Activated CD4-positive, alpha-beta memory T cell treated with anti-CD3 and anti-CD28 coated beads for 36 hours (primary cell): ENCODE measurements at regions of chr2 and their contacts with region 1.

Region 1: DNA sequence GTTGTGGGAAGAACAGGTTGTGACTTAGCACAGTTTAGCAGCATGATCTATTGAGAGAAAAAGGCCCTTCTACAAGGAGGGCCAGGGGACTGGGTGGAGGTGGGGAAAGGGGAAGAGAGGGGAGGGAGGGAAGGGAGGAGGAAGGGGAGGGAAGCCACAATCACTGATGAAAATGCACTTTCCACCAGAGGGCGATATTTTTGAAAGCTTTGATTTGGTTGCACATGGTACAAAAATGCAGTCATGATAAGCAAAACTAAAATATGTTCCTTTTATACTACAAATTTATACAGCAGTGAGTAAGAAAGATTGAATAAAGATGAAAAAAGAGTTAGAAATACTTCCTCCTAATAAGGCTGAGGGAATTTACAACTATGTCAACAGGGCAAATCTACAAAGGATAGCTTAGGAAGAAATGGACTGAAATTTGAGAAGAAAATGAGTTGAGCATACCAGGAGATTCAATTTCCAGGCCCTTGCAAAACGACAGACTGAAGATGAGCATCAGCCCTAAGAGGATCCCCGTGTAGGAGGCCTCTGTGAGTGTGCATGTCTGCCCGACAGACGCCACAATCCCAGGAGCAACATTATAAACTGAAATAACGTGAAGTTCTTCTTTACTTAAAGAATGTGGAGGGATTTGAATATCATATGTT is 17.2 kb downstream of the SH3YL1 start:
- DNase-seq: peak; percentile 20
- H3K4me3 Mint-ChIP-seq: no peak overlapping the region
- H3K27ac Mint-ChIP-seq: no peak overlapping the region
- H3K4me1 Mint-ChIP-seq: peaks cover 2% of the 10 kb centered on the region
- H3K27me3 Mint-ChIP-seq: no peaks in the 10 kb centered on the region

Region 2: DNA sequence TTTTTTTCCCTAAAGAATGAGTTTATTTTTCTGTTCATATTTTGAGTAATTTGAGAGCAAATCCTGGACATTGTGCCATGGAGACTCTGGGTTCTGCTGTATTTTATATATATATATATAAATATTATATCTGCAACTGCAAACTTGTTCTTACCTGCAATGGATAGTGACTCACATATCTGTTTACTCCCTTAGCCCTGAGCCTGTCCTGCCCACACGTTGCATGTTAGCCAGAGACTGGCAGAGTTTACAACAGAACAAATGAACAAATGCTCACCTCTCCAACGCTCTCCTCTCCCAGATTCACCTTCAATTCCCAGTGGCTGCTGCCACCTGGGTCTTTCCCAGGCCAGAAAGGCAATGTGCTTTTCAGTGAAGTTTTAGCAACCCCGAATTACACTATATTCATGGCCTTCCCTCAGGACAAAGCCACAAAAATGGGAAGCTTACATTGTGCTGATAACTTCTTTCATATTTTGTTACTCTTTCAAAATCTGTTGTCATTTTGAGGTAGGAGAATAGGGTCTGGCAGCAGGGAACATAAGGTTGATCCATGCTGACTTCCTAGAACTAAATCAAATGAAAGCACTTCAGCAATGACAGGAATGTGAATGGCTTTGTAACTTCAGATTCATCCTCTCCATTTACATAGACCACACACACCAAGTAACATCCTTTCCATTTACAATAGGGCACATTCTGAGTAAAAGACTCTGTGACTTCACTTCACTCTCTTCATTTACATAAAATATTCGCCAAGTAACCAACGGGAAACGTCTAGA is 94.9 kb before region 1 on chr2:
- CTCF ChIA-PET with region 1: no interaction called
- POLR2A ChIA-PET with region 1: no interaction called
- intact Hi-C with region 1: no loop called
- DNase-seq: no peak
- H3K4me3 Mint-ChIP-seq: no peak overlapping the region
- H3K27ac Mint-ChIP-seq: no peak overlapping the region
- H3K4me1 Mint-ChIP-seq: no peaks in the 10 kb centered on the region
- H3K27me3 Mint-ChIP-seq: peaks cover 9% of the 10 kb centered on the region

Region 3: GRCh38 chr2:257429-257828 is 10.8 kb after region 1 on chr2:
- CTCF ChIA-PET with region 1: interaction called, 17 read pairs
- POLR2A ChIA-PET with region 1: no interaction called
- intact Hi-C with region 1: no loop called
- DNase-seq: no peak
- H3K4me3 Mint-ChIP-seq: no peak overlapping the region
- H3K27ac Mint-ChIP-seq: no peak overlapping the region
- H3K4me1 Mint-ChIP-seq: peaks cover 4% of the 10 kb centered on the region
- H3K27me3 Mint-ChIP-seq: no peaks in the 10 kb centered on the region

Region 4: DNA sequence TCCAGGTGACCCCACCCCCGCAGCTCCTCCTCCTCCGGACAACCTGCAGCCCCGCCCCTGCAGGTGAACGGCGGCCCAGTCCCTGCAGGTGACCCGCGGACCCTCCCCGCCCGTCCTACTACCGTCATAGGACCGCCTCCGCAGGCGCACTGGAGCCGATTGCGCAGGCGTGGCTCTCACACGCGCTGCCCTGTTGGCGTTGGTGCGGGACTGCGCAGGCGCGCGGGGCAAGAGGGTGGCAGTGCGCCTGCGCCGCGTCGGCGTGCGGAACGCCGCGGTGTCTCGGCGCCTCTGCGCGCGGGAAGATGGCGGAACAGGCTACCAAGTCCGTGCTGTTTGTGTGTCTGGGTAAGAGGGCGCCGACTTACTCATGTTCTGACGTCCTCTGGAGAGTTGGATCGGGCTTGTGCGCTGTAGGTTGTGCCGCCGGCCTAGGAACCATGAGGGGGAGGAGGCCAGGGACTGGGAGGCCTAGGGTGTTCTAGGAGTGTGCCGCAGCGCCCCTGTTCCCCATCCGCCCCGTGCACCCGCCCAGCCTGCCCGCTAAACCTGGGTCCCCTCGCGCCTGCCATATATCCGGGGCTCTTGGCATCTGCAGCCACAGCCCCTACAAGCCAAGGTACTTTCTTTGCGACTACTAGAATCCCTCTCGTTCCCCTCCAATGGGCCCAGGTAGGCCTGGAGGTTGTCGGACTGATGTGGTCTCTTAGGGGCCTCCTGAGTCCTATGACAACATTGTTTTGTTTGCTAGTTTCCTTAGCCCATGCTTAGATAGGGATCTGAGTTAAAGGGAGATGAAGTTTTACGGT is 18.2 kb after region 1 on chr2 and contains the start of gene ACP1:
- CTCF ChIA-PET with region 1: interaction called, 9 read pairs
- POLR2A ChIA-PET with region 1: no interaction called
- intact Hi-C with region 1: loop called (anchors 2 kb)
- DNase-seq: peak; percentile 96
- H3K4me3 Mint-ChIP-seq: peak within 1 kb of the TSS; percentile 91
- H3K27ac Mint-ChIP-seq: peak within 1 kb of the TSS; percentile 93
- H3K4me1 Mint-ChIP-seq: peaks cover 44% of the 10 kb centered on the region
- H3K27me3 Mint-ChIP-seq: no peaks in the 10 kb centered on the region
- total RNA-seq, gene ACP1: 121 to 127 TPM

Region 5: GRCh38 chr2:290090-290722 is 43.6 kb after region 1 on chr2:
- CTCF ChIA-PET with region 1: interaction called, 6 read pairs
- POLR2A ChIA-PET with region 1: no interaction called
- intact Hi-C with region 1: loop called (anchors 2 kb)
- DNase-seq: peak; percentile 68
- H3K4me3 Mint-ChIP-seq: peak overlapping the region; percentile 48
- H3K27ac Mint-ChIP-seq: no peak overlapping the region
- H3K4me1 Mint-ChIP-seq: peaks cover 3% of the 10 kb centered on the region
- H3K27me3 Mint-ChIP-seq: peaks cover 32% of the 10 kb centered on the region

Region 6: DNA sequence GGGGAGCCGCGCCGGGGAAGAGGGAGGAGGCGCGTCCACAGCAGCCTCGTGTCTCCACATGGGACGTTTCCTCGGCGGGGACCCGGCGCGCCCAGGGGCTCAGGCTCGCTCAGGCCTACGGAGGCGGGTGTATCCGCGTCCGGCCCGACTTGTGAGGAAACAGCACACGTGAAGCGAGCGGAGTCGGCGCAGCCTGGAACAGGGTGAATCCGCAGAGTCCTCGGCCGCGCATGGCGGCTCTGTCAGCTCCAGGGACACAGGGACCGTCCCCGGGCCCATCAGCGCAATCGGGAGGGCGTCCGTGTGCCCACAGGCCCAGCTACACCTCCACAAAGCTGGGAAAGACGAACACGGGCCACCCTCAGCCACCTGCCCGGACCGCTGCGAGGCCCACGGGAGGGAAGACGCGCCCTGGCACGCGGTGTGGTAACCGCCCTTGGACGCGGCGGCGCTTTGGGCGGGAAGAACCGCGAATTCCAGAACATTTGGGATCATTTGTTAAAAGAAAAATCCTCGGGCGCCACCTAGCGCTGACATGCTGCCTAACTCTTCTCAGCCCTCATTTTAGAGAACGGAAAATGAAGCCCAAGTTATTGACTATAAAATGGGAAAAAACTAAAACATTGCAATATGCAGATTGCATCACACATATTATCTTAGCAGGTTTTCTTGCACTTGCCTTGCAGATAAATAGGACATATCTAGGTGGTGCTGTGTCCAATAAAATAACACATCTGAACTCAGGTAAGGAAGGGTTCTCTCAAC is 390.2 kb after region 1 on chr2:
- CTCF ChIA-PET with region 1: interaction called, 16 read pairs
- POLR2A ChIA-PET with region 1: no interaction called
- intact Hi-C with region 1: loop called (anchors 1 kb)
- DNase-seq: peak; percentile 62
- H3K4me3 Mint-ChIP-seq: peak overlapping the region; percentile 59
- H3K27ac Mint-ChIP-seq: no peak overlapping the region
- H3K4me1 Mint-ChIP-seq: peaks cover 4% of the 10 kb centered on the region
- H3K27me3 Mint-ChIP-seq: peaks cover 3% of the 10 kb centered on the region

Region 7: DNA sequence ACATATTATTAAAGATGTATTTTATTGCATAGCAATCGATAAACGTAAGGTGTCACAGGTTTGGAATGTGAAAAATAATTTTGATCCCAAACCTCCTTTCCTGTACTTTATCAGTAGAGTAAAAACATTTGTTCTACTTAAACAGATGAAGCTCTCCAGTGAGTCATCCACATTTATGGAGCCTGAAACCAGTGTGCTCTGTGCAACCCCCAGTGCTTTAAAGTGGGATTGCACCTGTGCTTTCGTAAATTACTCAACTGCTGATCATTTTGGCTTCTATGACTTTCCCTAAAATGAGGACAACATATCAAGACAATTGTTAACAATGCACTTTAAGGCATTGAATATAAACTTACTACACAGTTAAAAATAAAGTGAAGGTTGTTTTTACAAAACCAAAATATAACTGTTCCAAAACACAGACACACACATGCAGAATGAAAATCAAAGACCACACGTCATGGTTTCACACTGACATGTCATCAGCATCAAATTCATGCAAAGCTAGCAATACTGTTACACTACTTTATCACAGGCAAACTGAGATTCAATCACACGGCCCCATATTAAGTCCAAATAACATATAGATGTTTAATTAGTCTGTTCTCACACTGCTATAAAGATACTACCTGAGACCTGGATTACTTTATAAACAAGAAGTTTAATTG is 420.8 kb after region 1 on chr2:
- CTCF ChIA-PET with region 1: interaction called, 3 read pairs
- POLR2A ChIA-PET with region 1: no interaction called
- intact Hi-C with region 1: loop called (anchors 1 kb)
- DNase-seq: peak; percentile 44
- H3K4me3 Mint-ChIP-seq: no peak overlapping the region
- H3K27ac Mint-ChIP-seq: no peak overlapping the region
- H3K4me1 Mint-ChIP-seq: peaks cover 18% of the 10 kb centered on the region
- H3K27me3 Mint-ChIP-seq: no peaks in the 10 kb centered on the region